ENCODE measurements at regions of chr11 and their contacts with region 1.

Region 1: GRCh38 chr11:47152953-47153950 is 23.4 kb downstream of the ARFGAP2 start:
- DNase-seq: peak; percentile 81 to 94 (median 89)
- ATAC-seq: peak; percentile 64 to 89 (median 80)
- H3K4me3 ChIP-seq: no peak overlapping the region
- H3K27ac ChIP-seq: peak overlapping the region in 3 of 4 donors; percentile 41 to 74 (median 49)
- H3K4me1 ChIP-seq: peaks cover 5 to 32% (median 28%) of the 10 kb centered on the region in 3 donors
- H3K27me3 ChIP-seq: no peaks in the 10 kb centered on the region
- CTCF ChIP-seq: peak; percentile 79 to 97 (median 92)

Region 2: GRCh38 chr11:46889689-46890475 is 263.4 kb before region 1 on chr11:
- intact Hi-C with region 1: loop called in 1 of 3 experiments (anchors 2 kb)
- DNase-seq: peak; percentile 47 to 80 (median 54)
- ATAC-seq: peak; percentile 91 to 96 (median 94)
- H3K4me3 ChIP-seq: no peak overlapping the region
- H3K27ac ChIP-seq: no peak overlapping the region
- H3K4me1 ChIP-seq: no peaks in the 10 kb centered on the region
- H3K27me3 ChIP-seq: no peaks in the 10 kb centered on the region
- CTCF ChIP-seq: peak; percentile 68 to 80 (median 76)

Region 3: GRCh38 chr11:47010179-47010578 is 143.1 kb before region 1 on chr11:
- intact Hi-C with region 1: loop called in 1 of 3 experiments (anchors 10 kb)
- DNase-seq: no peak
- ATAC-seq: peak in 1 of 4 donors; percentile 59
- H3K4me3 ChIP-seq: no peak overlapping the region
- H3K27ac ChIP-seq: no peak overlapping the region
- H3K4me1 ChIP-seq: peaks cover 5 to 9% (median 8%) of the 10 kb centered on the region in 3 donors
- H3K27me3 ChIP-seq: no peaks in the 10 kb centered on the region
- CTCF ChIP-seq: no peak